T-cell (primary cell): ENCODE measurements at regions of chr12 and their contacts with region 1.

Region 1: GRCh38 chr12:119857041-119857591 is 20.0 kb downstream of the CIT start:
- DNase-seq: no peak
- ATAC-seq: no peak
- H3K4me3 ChIP-seq: no peak overlapping the region
- H3K4me3 Mint-ChIP-seq: no peak overlapping the region
- H3K27ac ChIP-seq: no peak overlapping the region
- H3K27ac Mint-ChIP-seq: peak overlapping the region in 1 of 2 donors; percentile 1
- H3K4me1 ChIP-seq: peaks cover 2 to 3% of the 10 kb centered on the region in 2 experiments
- H3K4me1 Mint-ChIP-seq: peaks cover 13 to 15% (median 14%) of the 10 kb centered on the region in 3 donors
- H3K27me3 ChIP-seq: no peaks in the 10 kb centered on the region
- H3K27me3 Mint-ChIP-seq: no peaks in the 10 kb centered on the region

Region 2: GRCh38 chr12:119410390-119410789 is 446.7 kb before region 1 on chr12:
- CTCF ChIA-PET with region 1: no interaction called
- POLR2A ChIA-PET with region 1: no interaction called
- DNase-seq: no peak
- ATAC-seq: no peak
- H3K4me3 ChIP-seq: no peak overlapping the region
- H3K4me3 Mint-ChIP-seq: no peak overlapping the region
- H3K27ac ChIP-seq: no peak overlapping the region
- H3K27ac Mint-ChIP-seq: no peak overlapping the region
- H3K4me1 ChIP-seq: no peaks in the 10 kb centered on the region
- H3K4me1 Mint-ChIP-seq: peaks cover 0 to 1% (median 0%) of the 10 kb centered on the region in 3 donors
- H3K27me3 ChIP-seq: peaks cover 0 to 12% of the 10 kb centered on the region in 2 experiments
- H3K27me3 Mint-ChIP-seq: peaks cover 7 to 23% of the 10 kb centered on the region in 2 donors

Region 3: DNA sequence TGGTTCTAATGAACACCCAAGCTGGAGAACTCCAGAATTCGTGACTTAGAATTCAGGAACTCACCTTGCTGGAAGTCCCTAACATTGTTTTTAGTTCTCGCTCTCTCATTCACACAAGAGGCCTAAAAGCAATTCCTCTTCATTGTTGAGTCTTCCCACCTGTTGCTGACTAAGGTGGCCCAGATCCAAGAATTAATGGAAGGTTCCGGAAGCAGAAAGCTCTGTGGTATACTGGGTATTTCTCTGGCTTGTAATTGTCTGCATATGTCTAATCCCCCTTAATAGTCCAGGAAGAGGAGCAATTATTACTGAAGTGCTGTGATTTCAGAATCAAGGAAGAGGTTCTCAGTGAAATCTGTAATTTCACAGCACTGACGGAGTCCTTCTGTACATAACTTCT is 232.2 kb before region 1 on chr12:
- CTCF ChIA-PET with region 1: no interaction called
- POLR2A ChIA-PET with region 1: no interaction called
- DNase-seq: no peak
- ATAC-seq: no peak
- H3K4me3 ChIP-seq: no peak overlapping the region
- H3K4me3 Mint-ChIP-seq: no peak overlapping the region
- H3K27ac ChIP-seq: no peak overlapping the region
- H3K27ac Mint-ChIP-seq: no peak overlapping the region
- H3K4me1 ChIP-seq: no peaks in the 10 kb centered on the region
- H3K4me1 Mint-ChIP-seq: no peaks in the 10 kb centered on the region
- H3K27me3 ChIP-seq: peaks cover 0 to 17% of the 10 kb centered on the region in 2 experiments
- H3K27me3 Mint-ChIP-seq: peaks cover 28 to 30% of the 10 kb centered on the region in 2 donors

Region 4: DNA sequence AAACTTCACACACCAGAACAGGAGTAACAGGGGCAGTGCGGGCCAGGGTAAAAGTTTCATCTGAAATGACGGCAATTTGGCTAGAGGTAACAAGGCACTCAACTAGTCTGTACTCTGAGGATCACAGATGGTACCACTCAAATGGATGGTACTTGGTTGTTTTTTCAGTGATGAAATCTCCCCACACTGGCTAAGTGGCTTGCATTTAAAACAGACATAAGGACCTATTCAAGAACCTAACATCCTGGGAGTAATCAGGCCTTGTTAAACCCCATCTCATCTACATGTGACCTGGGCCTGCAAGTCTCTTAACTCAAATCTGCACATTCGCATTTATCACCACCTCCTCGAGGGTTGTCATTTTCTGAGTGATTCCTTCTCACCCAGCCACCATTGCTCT is 98.4 kb before region 1 on chr12:
- CTCF ChIA-PET with region 1: no interaction called
- POLR2A ChIA-PET with region 1: no interaction called
- DNase-seq: no peak
- ATAC-seq: no peak
- H3K4me3 ChIP-seq: no peak overlapping the region
- H3K4me3 Mint-ChIP-seq: no peak overlapping the region
- H3K27ac ChIP-seq: no peak overlapping the region
- H3K27ac Mint-ChIP-seq: no peak overlapping the region
- H3K4me1 ChIP-seq: no peaks in the 10 kb centered on the region
- H3K4me1 Mint-ChIP-seq: no peaks in the 10 kb centered on the region
- H3K27me3 ChIP-seq: no peaks in the 10 kb centered on the region
- H3K27me3 Mint-ChIP-seq: no peaks in the 10 kb centered on the region

Region 5: GRCh38 chr12:119835068-119835467 is 22.0 kb before region 1 on chr12:
- CTCF ChIA-PET with region 1: no interaction called
- POLR2A ChIA-PET with region 1: no interaction called
- DNase-seq: no peak
- ATAC-seq: no peak
- H3K4me3 ChIP-seq: no peak overlapping the region
- H3K4me3 Mint-ChIP-seq: no peak overlapping the region
- H3K27ac ChIP-seq: no peak overlapping the region
- H3K27ac Mint-ChIP-seq: no peak overlapping the region
- H3K4me1 ChIP-seq: no peaks in the 10 kb centered on the region
- H3K4me1 Mint-ChIP-seq: no peaks in the 10 kb centered on the region
- H3K27me3 ChIP-seq: no peaks in the 10 kb centered on the region
- H3K27me3 Mint-ChIP-seq: no peaks in the 10 kb centered on the region

Region 6: GRCh38 chr12:119869720-119870119 is 12.6 kb after region 1 on chr12:
- CTCF ChIA-PET with region 1: no interaction called
- POLR2A ChIA-PET with region 1: interaction called in 1 of 2 experiments, 14 read pairs
- DNase-seq: no peak
- ATAC-seq: no peak
- H3K4me3 ChIP-seq: no peak overlapping the region
- H3K4me3 Mint-ChIP-seq: no peak overlapping the region
- H3K27ac ChIP-seq: no peak overlapping the region
- H3K27ac Mint-ChIP-seq: no peak overlapping the region
- H3K4me1 ChIP-seq: no peaks in the 10 kb centered on the region
- H3K4me1 Mint-ChIP-seq: no peaks in the 10 kb centered on the region
- H3K27me3 ChIP-seq: no peaks in the 10 kb centered on the region
- H3K27me3 Mint-ChIP-seq: no peaks in the 10 kb centered on the region